WTC11 (cell line): ENCODE measurements at regions of chr12 and their contacts with region 1.

Region 1: GRCh38 chr12:80269803-80270552 is 170.6 kb downstream of the OTOGL start:
- DNase-seq: no peak
- ATAC-seq: peak; percentile 84
- H3K4me3 Mint-ChIP-seq: no peak overlapping the region
- H3K27ac Mint-ChIP-seq: no peak overlapping the region
- H3K4me1 Mint-ChIP-seq: no peaks in the 10 kb centered on the region
- H3K27me3 Mint-ChIP-seq: no peaks in the 10 kb centered on the region
- CTCF ChIP-seq: peak; percentile 53; the same call in 1 of the 2 replicates

Region 2: GRCh38 chr12:80195074-80195726 is 74.8 kb before region 1 on chr12:
- CTCF ChIA-PET with region 1: interaction called, 74 read pairs
- POLR2A ChIA-PET with region 1: no interaction called
- DNase-seq: no peak
- ATAC-seq: peak; percentile 69
- H3K4me3 Mint-ChIP-seq: no peak overlapping the region
- H3K27ac Mint-ChIP-seq: no peak overlapping the region
- H3K4me1 Mint-ChIP-seq: peaks cover 10% of the 10 kb centered on the region
- H3K27me3 Mint-ChIP-seq: no peaks in the 10 kb centered on the region
- CTCF ChIP-seq: no peak

Region 3: GRCh38 chr12:80469681-80470080 is 199.7 kb after region 1 on chr12:
- CTCF ChIA-PET with region 1: no interaction called
- POLR2A ChIA-PET with region 1: no interaction called
- DNase-seq: no peak
- ATAC-seq: no peak
- H3K4me3 Mint-ChIP-seq: no peak overlapping the region
- H3K27ac Mint-ChIP-seq: no peak overlapping the region
- H3K4me1 Mint-ChIP-seq: no peaks in the 10 kb centered on the region
- H3K27me3 Mint-ChIP-seq: no peaks in the 10 kb centered on the region
- CTCF ChIP-seq: no peak